Activated CD4-positive, alpha-beta T cell treated with anti-CD3 and anti-CD28 coated beads, Interleukin-2, amount 10 ng/mL, durations not matched to agents 24 days and 14 days (primary cell): ENCODE measurements at regions of chr15 and their contacts with region 1.

Region 1: DNA sequence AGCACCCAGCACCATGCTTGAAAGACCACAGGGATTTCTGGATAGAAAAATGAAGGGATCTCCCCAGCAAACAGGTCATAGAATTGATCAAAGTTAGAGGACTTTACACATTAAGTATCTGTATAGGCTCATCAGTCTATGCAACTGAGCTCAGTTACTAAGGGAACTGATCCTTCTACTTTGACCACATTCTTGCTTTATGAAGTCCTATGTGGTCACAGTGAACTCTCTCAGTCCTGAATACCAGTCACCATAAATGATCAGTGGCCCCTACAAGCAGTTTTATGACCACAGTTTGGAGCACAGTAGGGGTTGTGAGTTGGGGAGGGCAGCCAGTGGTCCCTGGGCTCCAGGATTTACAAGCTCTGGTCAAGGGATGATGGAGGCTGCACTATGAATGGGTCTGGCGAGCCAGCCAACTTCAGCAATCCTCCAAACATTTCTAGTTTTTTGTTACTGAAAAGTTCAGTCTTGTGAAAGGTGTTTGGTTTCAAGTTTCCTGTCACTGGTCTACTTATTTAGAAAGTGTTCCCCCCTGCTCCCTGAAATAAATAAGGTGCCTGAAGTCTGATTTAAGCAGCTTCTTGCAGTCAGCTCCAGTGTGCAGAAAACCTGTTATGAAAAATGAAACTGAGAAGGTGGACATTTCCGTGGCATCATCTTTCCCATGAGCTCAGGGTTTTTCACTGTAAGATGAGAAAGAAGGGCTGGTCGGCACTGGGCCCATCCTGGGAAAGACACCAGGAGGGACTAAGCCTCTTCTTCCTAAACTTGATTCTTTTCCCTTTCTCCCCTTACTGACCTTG is 75.5 kb downstream of the DAPK2 start:
- DNase-seq: peak; percentile 83
- H3K4me3 Mint-ChIP-seq: peak overlapping the region; percentile 83
- H3K27ac Mint-ChIP-seq: peak overlapping the region; percentile 100
- H3K4me1 Mint-ChIP-seq: peaks cover 51% of the 10 kb centered on the region
- H3K27me3 Mint-ChIP-seq: no peaks in the 10 kb centered on the region

Region 2: GRCh38 chr15:63833021-63833696 is 137.7 kb before region 1 on chr15:
- intact Hi-C with region 1: loop called (anchors 2 kb)
- DNase-seq: peak; percentile 84
- H3K4me3 Mint-ChIP-seq: peak overlapping the region; percentile 99
- H3K27ac Mint-ChIP-seq: peak overlapping the region; percentile 100
- H3K4me1 Mint-ChIP-seq: peaks cover 46% of the 10 kb centered on the region
- H3K27me3 Mint-ChIP-seq: peaks cover 6% of the 10 kb centered on the region

Region 3: DNA sequence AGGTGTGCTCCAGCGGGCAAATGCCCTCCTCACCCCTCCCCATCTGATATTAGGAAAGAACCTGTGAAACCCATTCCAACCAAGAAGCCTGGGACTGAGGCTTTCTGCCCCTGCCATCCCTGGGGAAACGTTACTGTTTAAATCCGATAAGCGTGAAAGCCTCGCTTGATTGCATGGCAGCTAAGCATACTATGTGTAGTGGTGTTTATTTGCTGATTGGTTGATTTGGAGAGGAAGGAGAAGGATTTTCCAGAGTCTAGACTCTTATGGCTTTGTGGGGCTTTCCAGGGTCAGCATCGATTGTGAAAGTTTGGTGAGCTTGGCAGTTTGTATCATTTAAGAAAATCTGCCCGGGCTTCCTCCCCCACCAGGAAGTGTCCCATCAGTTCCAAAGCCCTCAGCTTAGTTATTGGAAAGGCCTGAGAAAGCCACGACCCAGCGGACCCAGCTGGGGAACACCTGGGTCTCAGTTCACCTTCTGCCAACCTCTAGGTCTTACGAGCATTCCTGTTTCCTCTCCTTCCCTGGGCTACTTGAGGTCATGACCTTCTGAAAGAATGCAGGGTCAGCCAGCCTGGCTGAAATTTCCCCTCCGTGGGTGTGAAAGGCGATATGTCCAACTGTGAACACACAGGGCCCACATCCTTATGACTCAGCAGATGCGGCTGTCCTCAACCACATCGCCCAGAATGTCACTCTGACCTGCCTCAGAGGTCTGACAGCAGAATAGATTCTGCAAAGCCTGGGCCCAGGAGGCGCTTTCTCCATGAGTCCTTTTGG is 74.3 kb before region 1 on chr15:
- intact Hi-C with region 1: loop called (anchors 1 kb)
- DNase-seq: peak; percentile 87
- H3K4me3 Mint-ChIP-seq: peak overlapping the region; percentile 34
- H3K27ac Mint-ChIP-seq: peak overlapping the region; percentile 67
- H3K4me1 Mint-ChIP-seq: peaks cover 70% of the 10 kb centered on the region
- H3K27me3 Mint-ChIP-seq: no peaks in the 10 kb centered on the region

Region 4: DNA sequence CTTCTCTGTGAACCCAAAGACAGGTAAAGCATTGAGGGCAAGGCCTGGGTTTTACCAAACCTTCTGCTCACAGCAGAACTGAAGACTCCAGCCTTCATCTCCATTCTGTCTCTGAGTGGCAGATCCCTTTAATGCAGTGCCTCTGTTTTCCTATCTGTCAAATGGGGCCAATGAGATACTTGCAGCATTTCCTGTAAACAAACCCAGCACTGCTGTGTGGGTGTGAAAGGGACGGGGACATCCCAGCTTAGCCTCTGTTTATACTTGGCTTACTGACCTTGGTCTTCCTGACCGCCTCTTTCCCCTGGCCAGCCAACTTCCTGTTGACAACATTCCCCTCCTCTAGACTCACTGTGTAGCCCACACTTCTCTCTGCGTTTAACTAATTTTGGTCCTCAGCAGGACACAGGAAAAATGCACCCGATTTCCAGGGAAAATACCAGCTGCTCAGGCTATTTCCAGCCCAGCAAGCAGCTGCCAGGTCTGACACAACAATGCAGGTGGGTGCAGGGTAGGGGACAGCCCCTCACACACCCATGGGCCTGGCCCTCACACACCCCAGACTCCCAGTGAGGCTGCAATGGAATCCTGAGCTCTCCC is 31.2 kb before region 1 on chr15:
- intact Hi-C with region 1: loop called (anchors 1 kb)
- DNase-seq: peak; percentile 77
- H3K4me3 Mint-ChIP-seq: peak overlapping the region; percentile 68
- H3K27ac Mint-ChIP-seq: peak overlapping the region; percentile 86
- H3K4me1 Mint-ChIP-seq: peaks cover 40% of the 10 kb centered on the region
- H3K27me3 Mint-ChIP-seq: no peaks in the 10 kb centered on the region

Region 5: DNA sequence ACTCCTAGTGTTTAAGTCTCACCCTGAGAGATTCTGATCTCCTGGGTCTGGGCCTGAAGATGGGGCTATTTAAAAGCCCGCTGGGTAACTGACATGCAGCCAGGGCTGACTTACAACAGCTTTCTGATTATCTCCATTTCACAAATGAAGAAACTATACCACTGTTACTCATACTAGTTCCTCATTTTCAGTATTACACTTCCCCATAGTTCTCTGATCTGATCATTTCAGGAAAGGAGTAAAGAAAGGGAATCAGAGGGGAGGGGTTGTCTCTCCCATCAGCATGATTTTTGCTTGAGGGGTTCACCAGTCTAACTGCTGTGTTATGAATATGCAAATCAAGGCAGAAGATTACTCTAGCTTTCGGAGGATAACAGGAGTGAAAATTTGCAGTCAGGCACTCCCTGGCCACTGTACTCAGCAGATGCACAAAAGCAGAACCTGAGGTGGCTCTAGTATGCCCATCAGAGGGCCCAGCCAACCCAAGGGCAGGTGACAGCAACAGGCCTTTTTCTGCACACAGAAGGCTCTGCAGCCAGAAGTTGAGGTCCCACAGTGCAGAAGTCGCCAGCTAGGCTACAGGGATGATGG is 16.0 kb after region 1 on chr15:
- intact Hi-C with region 1: loop called (anchors 1 kb)
- DNase-seq: no peak
- H3K4me3 Mint-ChIP-seq: no peak overlapping the region
- H3K27ac Mint-ChIP-seq: peak overlapping the region; percentile 16
- H3K4me1 Mint-ChIP-seq: peaks cover 15% of the 10 kb centered on the region
- H3K27me3 Mint-ChIP-seq: no peaks in the 10 kb centered on the region

Region 6: DNA sequence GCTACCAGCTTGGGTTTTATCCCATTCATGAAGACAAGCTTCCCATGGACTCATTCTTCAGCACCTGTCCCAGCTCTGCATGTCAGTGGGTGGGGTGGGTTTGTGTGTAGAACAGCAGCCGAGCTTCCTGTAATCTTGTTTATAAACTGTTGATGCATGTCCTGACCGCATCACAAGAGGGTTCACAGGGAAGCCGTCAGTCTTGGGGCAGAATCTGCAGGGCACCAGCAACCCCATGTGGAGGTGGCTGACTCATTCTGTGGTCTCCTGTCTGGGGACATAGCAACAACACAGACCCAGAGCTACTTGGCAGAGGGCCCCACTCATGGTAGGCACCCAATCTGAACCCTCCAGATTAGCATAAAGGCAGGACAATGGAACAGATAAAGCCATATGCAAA is 39.9 kb after region 1 on chr15:
- intact Hi-C with region 1: loop called (anchors 1 kb)
- DNase-seq: peak; percentile 94
- H3K4me3 Mint-ChIP-seq: peak overlapping the region; percentile 72
- H3K27ac Mint-ChIP-seq: peak overlapping the region; percentile 88
- H3K4me1 Mint-ChIP-seq: peaks cover 52% of the 10 kb centered on the region
- H3K27me3 Mint-ChIP-seq: no peaks in the 10 kb centered on the region